ENCODE measurements at regions of chr6 and their contacts with region 1.

Region 1: GRCh38 chr6:106560996-106561685 is 68.2 kb downstream of the RTN4IP1 start:
- DNase-seq: no peak
- H3K4me3 ChIP-seq: no peak overlapping the region
- H3K27ac ChIP-seq: no peak overlapping the region
- H3K4me1 ChIP-seq: no peaks in the 10 kb centered on the region
- H3K27me3 ChIP-seq: no peaks in the 10 kb centered on the region
- CTCF ChIP-seq: no peak

Region 2: GRCh38 chr6:105431226-105431625 is 1129.9 kb before region 1 on chr6:
- intact Hi-C with region 1: loop called (anchors 2 kb)
- DNase-seq: no peak
- H3K4me3 ChIP-seq: no peak overlapping the region
- H3K27ac ChIP-seq: no peak overlapping the region
- H3K4me1 ChIP-seq: no peaks in the 10 kb centered on the region
- H3K27me3 ChIP-seq: no peaks in the 10 kb centered on the region
- CTCF ChIP-seq: peak in 2 of 3 experiments; percentile 36 to 52

Region 3: GRCh38 chr6:106339334-106340029 is 221.7 kb before region 1 on chr6:
- intact Hi-C with region 1: loop called (anchors 1 kb)
- DNase-seq: peak in 1 of 2 donors; percentile 68
- H3K4me3 ChIP-seq: no peak overlapping the region
- H3K27ac ChIP-seq: no peak overlapping the region
- H3K4me1 ChIP-seq: no peaks in the 10 kb centered on the region
- H3K27me3 ChIP-seq: no peaks in the 10 kb centered on the region
- CTCF ChIP-seq: peak; percentile 32 to 65 (median 53)

Region 4: GRCh38 chr6:106360410-106360988 is 200.6 kb before region 1 on chr6 and contains the start of gene CRYBG1:
- intact Hi-C with region 1: loop called (anchors 10 kb)
- DNase-seq: peak in 1 of 2 donors; percentile 66
- H3K4me3 ChIP-seq: peak within 1 kb of the TSS; percentile 59 to 61
- H3K27ac ChIP-seq: no peak within 1 kb of the TSS
- H3K4me1 ChIP-seq: peaks cover 2 to 12% of the 10 kb centered on the region in 2 donors
- H3K27me3 ChIP-seq: peaks cover 9% of the 10 kb centered on the region
- CTCF ChIP-seq: peak; percentile 33 to 63 (median 48)
- total RNA-seq, gene CRYBG1: 6.5 TPM

Region 5: GRCh38 chr6:106444777-106445507 is 116.2 kb before region 1 on chr6:
- intact Hi-C with region 1: loop called (anchors 1 kb)
- DNase-seq: no peak
- H3K4me3 ChIP-seq: no peak overlapping the region
- H3K27ac ChIP-seq: no peak overlapping the region
- H3K4me1 ChIP-seq: no peaks in the 10 kb centered on the region
- H3K27me3 ChIP-seq: no peaks in the 10 kb centered on the region
- CTCF ChIP-seq: peak; percentile 37 to 73 (median 65)

Measured in ascending aorta (tissue), 2 donors.